CD8-positive, alpha-beta memory T cell (primary cell): ENCODE measurements at regions of chr2 and their contacts with region 1.

Region 1: GRCh38 chr2:234288974-234289455 is 207.9 kb downstream of the ARL4C start:
- DNase-seq: peak; percentile 45 to 77 (median 67)
- H3K4me3 ChIP-seq: peak overlapping the region; percentile 45
- H3K4me3 Mint-ChIP-seq: peak overlapping the region in 6 of 7 donors; percentile 47 to 85 (median 71)
- H3K27ac ChIP-seq: peak overlapping the region; percentile 93
- H3K27ac Mint-ChIP-seq: peak overlapping the region; percentile 95 to 100 (median 100)
- H3K4me1 ChIP-seq: peaks cover 58% of the 10 kb centered on the region
- H3K4me1 Mint-ChIP-seq: peaks cover 64 to 80% (median 78%) of the 10 kb centered on the region in 3 donors
- H3K27me3 ChIP-seq: no peaks in the 10 kb centered on the region
- H3K27me3 Mint-ChIP-seq: peaks cover 0 to 3% of the 10 kb centered on the region in 2 donors

Region 2: GRCh38 chr2:234135720-234136221 is 153.2 kb before region 1 on chr2:
- CTCF ChIA-PET with region 1: interaction called, 28 read pairs
- POLR2A ChIA-PET with region 1: no interaction called
- DNase-seq: peak in 4 of 5 donors; percentile 34 to 60 (median 40)
- H3K4me3 ChIP-seq: no peak overlapping the region
- H3K4me3 Mint-ChIP-seq: peak overlapping the region in 3 of 7 donors; percentile 8 to 73 (median 23)
- H3K27ac ChIP-seq: no peak overlapping the region
- H3K27ac Mint-ChIP-seq: peak overlapping the region; percentile 33 to 95 (median 85)
- H3K4me1 ChIP-seq: peaks cover 27% of the 10 kb centered on the region
- H3K4me1 Mint-ChIP-seq: peaks cover 32 to 41% (median 35%) of the 10 kb centered on the region in 3 donors
- H3K27me3 ChIP-seq: no peaks in the 10 kb centered on the region
- H3K27me3 Mint-ChIP-seq: peaks cover 0 to 1% of the 10 kb centered on the region in 2 donors

Region 3: GRCh38 chr2:234300932-234301823 is 12.2 kb after region 1 on chr2:
- CTCF ChIA-PET with region 1: interaction called, 11 read pairs
- POLR2A ChIA-PET with region 1: interaction called, 5 read pairs
- DNase-seq: peak in 1 of 5 donors; percentile 13
- H3K4me3 ChIP-seq: no peak overlapping the region
- H3K4me3 Mint-ChIP-seq: peak overlapping the region in 2 of 7 donors; percentile 20 to 33
- H3K27ac ChIP-seq: no peak overlapping the region
- H3K27ac Mint-ChIP-seq: peak overlapping the region in 7 of 8 donors; percentile 3 to 93 (median 78)
- H3K4me1 ChIP-seq: peaks cover 52% of the 10 kb centered on the region
- H3K4me1 Mint-ChIP-seq: peaks cover 40 to 69% (median 53%) of the 10 kb centered on the region in 3 donors
- H3K27me3 ChIP-seq: no peaks in the 10 kb centered on the region
- H3K27me3 Mint-ChIP-seq: no peaks in the 10 kb centered on the region

Region 4: DNA sequence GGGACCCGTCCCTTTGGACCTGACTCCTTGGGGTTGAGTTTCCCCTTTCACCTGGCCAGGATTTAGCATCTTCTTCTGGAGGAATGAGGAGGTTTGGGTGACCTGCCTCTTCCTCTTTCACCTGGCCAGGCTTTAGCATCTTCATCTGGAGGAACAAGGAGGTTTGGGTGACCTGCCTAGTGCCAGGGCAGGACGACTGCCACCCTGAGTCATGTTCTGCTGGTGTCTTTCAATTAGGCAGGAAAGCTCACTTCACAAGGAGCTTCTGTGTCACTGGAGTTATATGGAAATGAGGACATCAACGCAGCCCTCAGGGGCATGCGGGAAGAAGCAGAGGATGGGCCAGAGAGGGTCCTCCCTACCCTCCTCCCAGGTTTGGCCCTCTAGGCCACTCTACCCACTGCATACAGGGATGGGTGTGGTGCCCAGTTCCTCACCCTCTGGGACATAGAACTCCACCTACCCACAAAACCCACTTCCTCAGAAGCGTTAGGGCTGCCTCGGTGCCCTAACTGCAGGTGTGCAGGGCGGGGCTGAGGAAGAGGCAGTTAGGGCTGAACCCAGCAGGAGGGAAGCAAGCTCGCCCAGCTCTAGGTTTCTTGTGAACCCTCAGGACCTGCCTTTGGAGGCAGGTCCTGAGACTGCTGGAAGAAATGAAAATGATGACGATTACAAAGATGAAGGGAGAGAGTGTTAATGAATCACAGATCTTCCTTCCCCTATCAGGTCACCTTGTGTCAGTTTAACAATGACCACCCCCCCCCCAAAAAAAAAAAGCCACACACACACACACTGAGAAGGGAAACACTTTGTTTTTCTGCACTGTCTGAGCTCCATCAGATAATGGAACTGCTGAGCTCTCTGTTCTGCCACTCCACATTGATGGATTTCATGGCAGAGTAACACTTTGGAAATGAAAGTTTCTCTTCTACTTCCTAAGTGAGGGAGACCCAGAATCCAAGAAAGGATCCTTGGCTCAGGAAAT is 136.9 kb after region 1 on chr2:
- CTCF ChIA-PET with region 1: interaction called, 21 read pairs
- POLR2A ChIA-PET with region 1: interaction called, 7 read pairs
- DNase-seq: peak; percentile 63 to 91 (median 87)
- H3K4me3 ChIP-seq: peak overlapping the region; percentile 56
- H3K4me3 Mint-ChIP-seq: peak overlapping the region; percentile 58 to 89 (median 71)
- H3K27ac ChIP-seq: peak overlapping the region; percentile 84
- H3K27ac Mint-ChIP-seq: peak overlapping the region; percentile 96 to 100 (median 100)
- H3K4me1 ChIP-seq: peaks cover 90% of the 10 kb centered on the region
- H3K4me1 Mint-ChIP-seq: peaks cover 81 to 100% (median 91%) of the 10 kb centered on the region in 3 donors
- H3K27me3 ChIP-seq: no peaks in the 10 kb centered on the region
- H3K27me3 Mint-ChIP-seq: peaks cover 0 to 4% of the 10 kb centered on the region in 2 donors

Region 5: DNA sequence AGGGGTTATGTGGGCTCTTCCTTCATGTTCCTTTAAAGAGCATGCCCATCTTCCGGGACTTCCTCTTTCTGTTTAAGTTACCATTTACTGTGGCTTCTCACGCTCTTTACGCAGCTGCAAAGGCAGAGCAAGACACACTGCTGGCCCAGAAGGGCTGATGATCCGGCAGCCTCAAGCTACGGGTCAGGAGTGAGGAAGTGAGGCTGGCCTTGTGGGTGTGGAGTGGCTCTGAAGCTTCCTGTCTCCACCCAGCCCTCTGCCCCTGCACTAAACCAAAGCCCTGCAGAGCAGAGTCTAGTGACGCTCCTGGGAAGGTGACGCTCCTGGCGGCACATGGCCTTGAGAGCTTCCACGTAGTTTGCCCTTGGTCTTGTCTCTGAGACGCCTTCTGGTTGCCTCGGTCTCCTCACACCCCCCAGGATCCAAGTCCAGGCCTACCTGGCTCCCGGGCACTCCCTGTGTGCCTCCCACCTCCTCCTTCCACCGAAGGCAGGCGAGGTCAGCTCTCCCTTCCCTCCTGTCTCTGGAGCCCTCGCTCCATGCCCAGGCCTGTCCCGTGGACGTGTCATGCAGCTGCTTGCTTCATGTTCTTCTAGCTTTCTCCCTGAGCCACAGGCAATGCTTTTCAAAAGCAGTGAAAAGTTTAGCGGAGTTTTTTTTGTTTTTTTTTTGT is 157.5 kb after region 1 on chr2:
- CTCF ChIA-PET with region 1: interaction called, 7 read pairs
- POLR2A ChIA-PET with region 1: interaction called, 12 read pairs
- DNase-seq: peak; percentile 69 to 95 (median 90)
- H3K4me3 ChIP-seq: peak overlapping the region; percentile 22
- H3K4me3 Mint-ChIP-seq: peak overlapping the region; percentile 49 to 90 (median 81)
- H3K27ac ChIP-seq: peak overlapping the region; percentile 89
- H3K27ac Mint-ChIP-seq: peak overlapping the region; percentile 97 to 100 (median 100)
- H3K4me1 ChIP-seq: peaks cover 96% of the 10 kb centered on the region
- H3K4me1 Mint-ChIP-seq: peaks cover 76 to 90% (median 88%) of the 10 kb centered on the region in 3 donors
- H3K27me3 ChIP-seq: no peaks in the 10 kb centered on the region
- H3K27me3 Mint-ChIP-seq: peaks cover 0 to 4% of the 10 kb centered on the region in 2 donors

Region 6: DNA sequence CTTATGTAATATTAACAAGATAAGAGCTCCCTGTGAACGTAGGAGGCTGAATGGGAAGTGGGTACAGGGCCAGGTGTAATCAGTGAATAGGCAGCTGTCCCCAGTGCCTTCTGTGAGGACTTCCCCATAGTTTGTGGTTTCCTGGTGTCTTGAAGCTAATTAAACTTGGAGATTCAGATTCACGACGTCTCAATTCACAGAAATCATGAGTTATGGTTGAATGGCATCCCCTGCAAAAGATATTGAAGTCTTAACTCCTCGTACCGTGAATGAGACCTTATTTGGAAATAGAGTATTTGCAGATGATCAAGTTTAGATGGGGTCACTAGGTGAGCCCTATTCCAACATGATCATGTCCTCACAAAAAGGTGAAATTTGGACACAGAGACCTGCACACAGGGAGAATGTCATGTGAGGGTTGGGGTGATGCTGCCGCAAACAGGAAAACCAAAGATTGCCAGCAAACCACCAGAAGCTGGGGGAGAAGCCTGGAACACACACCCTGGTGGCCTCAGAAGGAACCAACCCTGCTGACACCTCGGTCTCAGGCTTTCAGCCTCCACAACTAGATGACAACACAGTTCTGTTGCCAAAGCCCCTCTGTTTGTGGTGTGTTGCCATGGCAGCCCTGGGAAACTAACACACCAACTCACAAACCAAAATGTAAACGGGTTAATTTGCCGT is 194.7 kb after region 1 on chr2:
- CTCF ChIA-PET with region 1: interaction called, 14 read pairs
- POLR2A ChIA-PET with region 1: interaction called, 3 read pairs
- DNase-seq: peak; percentile 74 to 92 (median 89)
- H3K4me3 ChIP-seq: peak overlapping the region; percentile 3
- H3K4me3 Mint-ChIP-seq: peak overlapping the region; percentile 74 to 88 (median 75)
- H3K27ac ChIP-seq: peak overlapping the region; percentile 84
- H3K27ac Mint-ChIP-seq: peak overlapping the region; percentile 94 to 100 (median 98)
- H3K4me1 ChIP-seq: peaks cover 69% of the 10 kb centered on the region
- H3K4me1 Mint-ChIP-seq: peaks cover 72 to 96% (median 96%) of the 10 kb centered on the region in 3 donors
- H3K27me3 ChIP-seq: no peaks in the 10 kb centered on the region
- H3K27me3 Mint-ChIP-seq: peaks cover 0 to 2% of the 10 kb centered on the region in 2 donors

Region 7: GRCh38 chr2:234500394-234501006 is 211.5 kb after region 1 on chr2:
- CTCF ChIA-PET with region 1: interaction called, 86 read pairs
- POLR2A ChIA-PET with region 1: interaction called, 60 read pairs
- DNase-seq: peak; percentile 60 to 86 (median 71)
- H3K4me3 ChIP-seq: no peak overlapping the region
- H3K4me3 Mint-ChIP-seq: peak overlapping the region; percentile 21 to 88 (median 67)
- H3K27ac ChIP-seq: no peak overlapping the region
- H3K27ac Mint-ChIP-seq: peak overlapping the region; percentile 85 to 99 (median 96)
- H3K4me1 ChIP-seq: peaks cover 33% of the 10 kb centered on the region
- H3K4me1 Mint-ChIP-seq: peaks cover 30 to 32% (median 31%) of the 10 kb centered on the region in 3 donors
- H3K27me3 ChIP-seq: no peaks in the 10 kb centered on the region
- H3K27me3 Mint-ChIP-seq: peaks cover 0 to 11% of the 10 kb centered on the region in 2 donors